HepG2 (cell line): ENCODE measurements at regions of chr4 and their contacts with region 1.

Region 1: GRCh38 chr4:152556283-152556682 is 20.4 kb upstream of the FBXW7 start:
- DNase-seq: no peak
- ATAC-seq: no peak
- H3K4me3 ChIP-seq: peak overlapping the region; percentile 46 to 49 (median 46); a peak in 5 of 6 replicates
- H3K27ac ChIP-seq: no peak overlapping the region
- H3K4me1 ChIP-seq: no peaks in the 10 kb centered on the region
- H3K27me3 ChIP-seq: peaks cover 0 to 3% of the 10 kb centered on the region in 2 experiments; a peak in 2 of 5 replicates
- CTCF ChIP-seq: no peak
- EP300 ChIP-seq: no peak
- POLR2A ChIP-seq: no peak
- RAD21 ChIP-seq: no peak

Region 2: GRCh38 chr4:152021788-152022438 is 534.4 kb before region 1 on chr4:
- CTCF ChIA-PET with region 1: no interaction called
- POLR2A ChIA-PET with region 1: no interaction called
- in situ Hi-C with region 1: no loop called
- intact Hi-C with region 1: loop called (anchors 5 kb)
- DNase-seq: no peak
- ATAC-seq: no peak
- H3K4me3 ChIP-seq: no peak overlapping the region
- H3K27ac ChIP-seq: no peak overlapping the region
- H3K4me1 ChIP-seq: no peaks in the 10 kb centered on the region
- H3K27me3 ChIP-seq: peaks cover 0 to 5% of the 10 kb centered on the region in 2 experiments; a peak in 2 of 5 replicates
- CTCF ChIP-seq: no peak
- EP300 ChIP-seq: no peak
- POLR2A ChIP-seq: no peak
- RAD21 ChIP-seq: no peak

Region 3: GRCh38 chr4:152294331-152294730 is 262.0 kb before region 1 on chr4:
- CTCF ChIA-PET with region 1: no interaction called
- POLR2A ChIA-PET with region 1: no interaction called
- in situ Hi-C with region 1: no loop called
- intact Hi-C with region 1: no loop called
- DNase-seq: no peak
- ATAC-seq: no peak
- H3K4me3 ChIP-seq: no peak overlapping the region
- H3K27ac ChIP-seq: no peak overlapping the region
- H3K4me1 ChIP-seq: no peaks in the 10 kb centered on the region
- H3K27me3 ChIP-seq: no peaks in the 10 kb centered on the region; a peak in 1 of 5 replicates
- CTCF ChIP-seq: no peak
- EP300 ChIP-seq: no peak
- POLR2A ChIP-seq: no peak
- RAD21 ChIP-seq: no peak

Region 4: DNA sequence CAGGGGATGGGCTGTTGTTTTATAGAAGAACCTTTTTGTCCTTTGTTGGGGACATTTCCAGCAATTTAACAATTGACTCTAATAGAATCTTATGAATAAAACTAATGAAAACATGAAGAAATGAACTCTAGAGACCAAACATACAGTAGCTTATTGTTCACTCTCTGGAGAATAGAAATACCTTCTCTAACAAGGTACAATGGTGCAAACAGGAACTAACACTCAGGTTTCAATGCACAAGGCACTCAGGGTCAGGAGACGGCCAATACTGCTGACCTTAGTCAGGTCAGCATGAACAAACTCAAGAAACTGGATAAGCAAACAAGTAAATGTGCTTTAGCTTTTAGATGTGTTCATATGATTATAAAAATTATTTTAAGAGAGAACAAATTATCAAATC is 19.3 kb after region 1 on chr4:
- CTCF ChIA-PET with region 1: no interaction called
- POLR2A ChIA-PET with region 1: no interaction called
- in situ Hi-C with region 1: no loop called
- intact Hi-C with region 1: loop called (anchors 2 kb)
- DNase-seq: peak; percentile 33
- ATAC-seq: peak; percentile 62
- H3K4me3 ChIP-seq: no peak overlapping the region
- H3K27ac ChIP-seq: no peak overlapping the region
- H3K4me1 ChIP-seq: peaks cover 27% of the 10 kb centered on the region
- H3K27me3 ChIP-seq: peaks cover 3 to 4% of the 10 kb centered on the region in 2 experiments; a peak in 2 of 5 replicates
- CTCF ChIP-seq: no peak
- EP300 ChIP-seq: no peak
- POLR2A ChIP-seq: no peak
- RAD21 ChIP-seq: no peak

Region 5: GRCh38 chr4:152850377-152850776 is 294.1 kb after region 1 on chr4:
- CTCF ChIA-PET with region 1: no interaction called
- POLR2A ChIA-PET with region 1: no interaction called
- in situ Hi-C with region 1: no loop called
- intact Hi-C with region 1: no loop called
- DNase-seq: peak; percentile 7
- ATAC-seq: no peak
- H3K4me3 ChIP-seq: no peak overlapping the region
- H3K27ac ChIP-seq: no peak overlapping the region
- H3K4me1 ChIP-seq: no peaks in the 10 kb centered on the region
- H3K27me3 ChIP-seq: no peaks in the 10 kb centered on the region
- CTCF ChIP-seq: no peak
- EP300 ChIP-seq: no peak
- POLR2A ChIP-seq: no peak
- RAD21 ChIP-seq: no peak